Aorta (tissue), 5 donors: ENCODE measurements at regions of chr4 and their contacts with region 1.

Region 1: DNA sequence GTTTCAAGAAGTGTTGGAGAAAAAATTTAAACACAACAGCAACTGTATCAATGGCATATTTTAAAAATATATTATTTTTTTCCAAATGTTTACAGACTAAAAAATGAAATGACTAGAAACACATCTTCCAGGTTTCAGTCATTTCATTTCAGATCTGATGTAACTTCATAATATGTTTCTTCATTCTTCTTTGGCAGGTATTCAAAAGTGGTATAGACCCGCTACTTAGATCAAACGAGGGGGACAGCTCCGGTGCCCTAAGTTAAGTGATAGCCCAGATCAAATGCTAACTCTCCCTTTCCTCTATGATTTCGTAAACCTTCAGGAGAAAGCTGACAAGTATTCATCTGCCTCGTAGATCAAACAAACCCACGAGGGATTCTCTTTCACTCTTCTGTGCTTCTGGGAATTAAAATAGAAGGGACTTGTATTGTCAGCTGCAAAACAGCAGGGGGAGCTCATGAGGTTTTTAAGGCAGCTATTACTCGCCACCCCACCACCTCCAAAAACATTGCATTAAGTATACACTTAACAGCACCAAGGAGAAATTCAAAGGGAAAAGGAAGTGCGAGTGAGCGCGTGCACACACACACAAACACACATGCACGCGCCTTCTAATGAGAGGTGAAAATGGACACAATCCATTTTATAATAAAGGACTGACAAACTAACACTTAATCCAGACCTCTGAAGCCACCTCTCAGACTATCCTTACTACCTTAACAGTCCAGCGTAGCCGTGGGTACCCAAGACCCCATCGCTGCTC is 21.4 kb downstream of the HELT start:
- DNase-seq: no peak
- ATAC-seq: peak; percentile 82
- H3K4me3 ChIP-seq: no peak overlapping the region
- H3K27ac ChIP-seq: no peak overlapping the region
- H3K4me1 ChIP-seq: no peaks in the 10 kb centered on the region
- H3K27me3 ChIP-seq: no peaks in the 10 kb centered on the region

Region 2: GRCh38 chr4:185005216-185005819 is 34.4 kb before region 1 on chr4:
- intact Hi-C with region 1: no loop called
- DNase-seq: peak; percentile 91 to 94
- ATAC-seq: peak; percentile 90
- H3K4me3 ChIP-seq: no peak overlapping the region
- H3K27ac ChIP-seq: no peak overlapping the region
- H3K4me1 ChIP-seq: no peaks in the 10 kb centered on the region
- H3K27me3 ChIP-seq: no peaks in the 10 kb centered on the region

Region 3: DNA sequence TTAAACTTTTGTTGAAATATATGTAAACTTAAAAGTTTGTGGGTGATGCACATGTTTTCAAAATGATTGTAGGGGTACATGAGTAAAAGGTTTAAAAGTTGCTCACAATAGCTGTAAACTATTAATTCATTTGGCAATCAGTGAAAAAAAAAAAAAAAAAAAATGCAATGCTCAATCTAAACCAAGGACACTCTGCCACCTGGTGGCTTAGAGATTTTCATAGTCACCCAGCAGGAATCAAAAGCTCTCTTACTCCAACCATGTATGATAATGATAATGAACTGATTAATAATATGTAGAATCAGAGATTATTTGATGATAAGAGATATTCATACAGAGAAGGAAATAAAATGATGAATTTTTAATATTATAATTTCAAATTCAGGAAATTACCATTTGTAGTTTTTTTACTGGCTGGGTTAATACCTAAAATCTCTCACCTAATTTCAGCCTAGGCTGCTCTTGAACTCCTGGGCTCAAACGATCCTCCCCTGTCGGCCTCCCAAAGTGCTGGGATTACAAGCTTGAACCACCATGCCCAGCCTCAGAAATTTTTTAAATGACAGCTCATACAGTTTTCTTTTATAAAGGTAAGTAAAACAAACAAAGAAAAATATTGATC is 56.5 kb after region 1 on chr4:
- intact Hi-C with region 1: loop called (anchors 2 to 5 kb)
- DNase-seq: no peak
- ATAC-seq: no peak
- H3K4me3 ChIP-seq: no peak overlapping the region
- H3K27ac ChIP-seq: no peak overlapping the region
- H3K4me1 ChIP-seq: no peaks in the 10 kb centered on the region
- H3K27me3 ChIP-seq: no peaks in the 10 kb centered on the region

Region 4: DNA sequence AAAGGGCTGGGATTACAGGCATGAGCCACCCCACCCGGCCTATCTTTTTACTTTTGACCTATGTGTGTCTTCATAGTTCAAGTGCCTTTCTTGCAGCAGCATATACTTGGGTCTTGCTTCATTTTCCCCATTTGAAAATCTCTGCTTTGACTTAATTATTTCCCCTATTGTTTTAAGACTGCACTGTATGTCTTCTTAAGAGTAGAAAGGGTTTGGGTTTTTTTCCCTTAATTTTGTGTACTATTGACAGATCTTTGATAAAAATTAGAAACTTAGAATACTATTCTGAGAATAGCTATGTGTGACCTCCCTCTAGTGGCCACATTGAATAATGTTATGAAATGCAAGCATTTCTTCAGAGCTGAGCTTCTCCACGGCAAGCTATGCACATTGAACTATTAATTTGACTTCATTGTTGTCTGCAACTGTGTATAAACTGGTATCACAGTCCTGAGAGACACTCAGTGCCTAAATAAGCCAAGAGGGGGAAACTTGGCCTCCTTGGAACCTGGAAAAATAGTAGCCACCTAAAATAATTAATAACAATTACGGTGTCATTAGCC is 94.7 kb after region 1 on chr4:
- intact Hi-C with region 1: loop called (anchors 2 to 5 kb)
- DNase-seq: no peak
- ATAC-seq: no peak
- H3K4me3 ChIP-seq: no peak overlapping the region
- H3K27ac ChIP-seq: no peak overlapping the region
- H3K4me1 ChIP-seq: no peaks in the 10 kb centered on the region
- H3K27me3 ChIP-seq: no peaks in the 10 kb centered on the region

Region 5: GRCh38 chr4:185183619-185184281 is 144.1 kb after region 1 on chr4:
- intact Hi-C with region 1: loop called (anchors 2 to 5 kb)
- DNase-seq: peak in 1 of 2 donors; percentile 79
- ATAC-seq: peak; percentile 77
- H3K4me3 ChIP-seq: no peak overlapping the region
- H3K27ac ChIP-seq: peak overlapping the region in 1 of 2 donors; percentile 52
- H3K4me1 ChIP-seq: peaks cover 4 to 10% of the 10 kb centered on the region in 2 donors
- H3K27me3 ChIP-seq: no peaks in the 10 kb centered on the region

Region 6: GRCh38 chr4:185265942-185266341 is 226.3 kb after region 1 on chr4:
- intact Hi-C with region 1: no loop called
- DNase-seq: no peak
- ATAC-seq: no peak
- H3K4me3 ChIP-seq: no peak overlapping the region
- H3K27ac ChIP-seq: no peak overlapping the region
- H3K4me1 ChIP-seq: peaks cover 0 to 2% of the 10 kb centered on the region in 2 donors
- H3K27me3 ChIP-seq: no peaks in the 10 kb centered on the region